ENCODE measurements at regions of chr15 and their contacts with region 1.

Region 1: GRCh38 chr15:45166834-45167630 is 20.7 kb downstream of the SHF start:
- DNase-seq: peak; percentile 64 to 90 (median 84)
- ATAC-seq: peak; percentile 90
- H3K4me3 ChIP-seq: peak overlapping the region; percentile 73 to 81
- H3K4me3 Mint-ChIP-seq: peak overlapping the region; percentile 81
- H3K27ac ChIP-seq: peak overlapping the region; percentile 86 to 87
- H3K27ac Mint-ChIP-seq: peak overlapping the region; percentile 87
- H3K4me1 ChIP-seq: peaks cover 17% of the 10 kb centered on the region
- H3K4me1 Mint-ChIP-seq: peaks cover 19% of the 10 kb centered on the region
- H3K27me3 ChIP-seq: no peaks in the 10 kb centered on the region
- H3K27me3 Mint-ChIP-seq: no peaks in the 10 kb centered on the region
- CTCF ChIP-seq: peak; percentile 47

Region 2: GRCh38 chr15:44519537-44519936 is 647.5 kb before region 1 on chr15:
- CTCF ChIA-PET with region 1: no interaction called
- POLR2A ChIA-PET with region 1: no interaction called
- intact Hi-C with region 1: no loop called
- DNase-seq: no peak
- ATAC-seq: no peak
- H3K4me3 ChIP-seq: no peak overlapping the region
- H3K4me3 Mint-ChIP-seq: no peak overlapping the region
- H3K27ac ChIP-seq: no peak overlapping the region
- H3K27ac Mint-ChIP-seq: no peak overlapping the region
- H3K4me1 ChIP-seq: no peaks in the 10 kb centered on the region
- H3K4me1 Mint-ChIP-seq: no peaks in the 10 kb centered on the region
- H3K27me3 ChIP-seq: no peaks in the 10 kb centered on the region
- H3K27me3 Mint-ChIP-seq: no peaks in the 10 kb centered on the region
- CTCF ChIP-seq: no peak

Region 3: DNA sequence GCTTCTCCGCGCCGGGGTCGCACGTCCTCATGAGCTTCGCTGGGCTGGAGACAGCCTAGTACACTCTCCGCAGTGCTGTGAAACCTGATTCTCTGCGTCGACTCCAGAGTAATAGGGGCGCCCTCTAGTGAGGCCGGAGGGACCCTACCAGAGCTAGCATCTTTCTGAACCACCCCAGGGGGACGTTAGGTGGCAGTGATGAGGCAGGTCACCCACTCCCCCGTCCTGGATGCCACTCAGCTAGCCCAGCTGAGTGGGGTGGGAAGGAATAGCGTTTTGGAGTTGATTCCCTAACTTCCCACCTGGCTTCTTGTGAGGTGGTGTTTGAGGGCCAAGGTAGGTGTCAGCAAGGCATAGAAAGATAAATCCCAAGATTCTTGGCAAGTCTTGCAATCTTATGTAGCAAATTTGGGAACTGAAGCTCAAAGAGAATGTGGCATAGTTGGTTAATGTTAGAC is 48.9 kb before region 1 on chr15:
- CTCF ChIA-PET with region 1: interaction called, 9 read pairs
- POLR2A ChIA-PET with region 1: interaction called, 3 read pairs
- intact Hi-C with region 1: loop called in 1 of 2 experiments (anchors 2 kb)
- DNase-seq: peak; percentile 67 to 90 (median 85)
- ATAC-seq: peak; percentile 99
- H3K4me3 ChIP-seq: peak overlapping the region; percentile 33 to 38
- H3K4me3 Mint-ChIP-seq: peak overlapping the region; percentile 78
- H3K27ac ChIP-seq: no peak overlapping the region
- H3K27ac Mint-ChIP-seq: no peak overlapping the region
- H3K4me1 ChIP-seq: peaks cover 35% of the 10 kb centered on the region
- H3K4me1 Mint-ChIP-seq: peaks cover 33% of the 10 kb centered on the region
- H3K27me3 ChIP-seq: peaks cover 18 to 31% of the 10 kb centered on the region in 2 experiments
- H3K27me3 Mint-ChIP-seq: peaks cover 70% of the 10 kb centered on the region
- CTCF ChIP-seq: peak; percentile 100

Region 4: GRCh38 chr15:45136378-45136764 is 30.7 kb before region 1 on chr15:
- CTCF ChIA-PET with region 1: interaction called, 12 read pairs
- POLR2A ChIA-PET with region 1: no interaction called
- intact Hi-C with region 1: no loop called
- DNase-seq: peak in 2 of 9 experiments; percentile 32 to 47
- ATAC-seq: peak; percentile 52
- H3K4me3 ChIP-seq: no peak overlapping the region
- H3K4me3 Mint-ChIP-seq: peak overlapping the region; percentile 58
- H3K27ac ChIP-seq: no peak overlapping the region
- H3K27ac Mint-ChIP-seq: no peak overlapping the region
- H3K4me1 ChIP-seq: peaks cover 7% of the 10 kb centered on the region
- H3K4me1 Mint-ChIP-seq: peaks cover 13% of the 10 kb centered on the region
- H3K27me3 ChIP-seq: peaks cover 13 to 14% of the 10 kb centered on the region in 2 experiments
- H3K27me3 Mint-ChIP-seq: peaks cover 33% of the 10 kb centered on the region
- CTCF ChIP-seq: no peak

Region 5: DNA sequence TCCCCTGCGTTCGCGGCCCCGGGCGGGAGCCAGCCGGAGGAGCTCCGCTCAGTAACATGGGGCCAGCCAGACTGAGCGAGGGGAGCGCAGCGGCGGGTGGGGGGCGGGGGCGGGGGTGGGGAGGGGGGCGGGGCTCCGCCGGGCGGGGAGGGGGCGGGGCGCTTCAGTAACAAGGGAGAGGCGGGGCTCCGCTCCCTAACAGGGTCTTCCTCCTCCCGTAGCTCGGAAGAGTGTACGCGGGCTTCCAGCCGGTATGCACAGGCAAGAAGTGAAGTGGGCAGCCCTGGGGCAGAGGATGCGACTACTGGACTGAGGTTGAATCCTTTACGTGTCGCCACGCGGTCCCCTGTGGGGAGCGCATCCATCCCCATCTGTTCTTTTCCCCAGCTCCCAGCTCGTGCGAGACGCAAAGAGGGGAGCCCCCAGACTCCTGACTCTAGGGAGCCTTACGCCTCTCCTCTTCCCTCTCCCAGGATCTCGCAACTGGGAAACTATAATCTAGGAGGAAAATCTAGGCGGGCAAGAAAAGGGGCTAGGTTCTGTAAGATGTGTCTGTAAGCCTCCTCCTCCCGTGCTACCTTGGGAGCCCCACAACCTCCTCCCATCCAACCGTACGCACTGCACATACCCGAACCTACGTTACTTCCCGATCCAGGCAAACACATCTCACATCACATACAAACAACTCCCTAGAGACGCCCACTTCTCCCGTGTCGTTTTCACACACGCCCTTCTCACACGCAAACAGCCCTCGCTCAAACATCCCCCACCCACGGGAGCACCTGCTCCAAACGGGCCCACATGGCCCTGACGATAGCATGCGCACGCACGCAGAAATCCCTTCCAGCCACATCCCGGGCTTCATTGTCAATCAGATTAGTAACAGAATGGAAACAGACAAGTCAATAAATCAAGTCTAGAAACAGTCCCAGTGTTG is 21.1 kb after region 1 on chr15 and contains the start of gene SHF:
- CTCF ChIA-PET with region 1: interaction called, 10 read pairs
- POLR2A ChIA-PET with region 1: interaction called, 10 read pairs
- intact Hi-C with region 1: loop called (anchors 1 to 2 kb)
- DNase-seq: peak; percentile 24 to 87 (median 68)
- ATAC-seq: peak; percentile 79
- H3K4me3 ChIP-seq: peak within 1 kb of the TSS; percentile 84 to 99
- H3K4me3 Mint-ChIP-seq: peak within 1 kb of the TSS; percentile 89
- H3K27ac ChIP-seq: peak within 1 kb of the TSS; percentile 71 to 73
- H3K27ac Mint-ChIP-seq: peak within 1 kb of the TSS; percentile 90
- H3K4me1 ChIP-seq: peaks cover 16% of the 10 kb centered on the region
- H3K4me1 Mint-ChIP-seq: peaks cover 26% of the 10 kb centered on the region
- H3K27me3 ChIP-seq: no peaks in the 10 kb centered on the region
- H3K27me3 Mint-ChIP-seq: no peaks in the 10 kb centered on the region
- CTCF ChIP-seq: no peak
- total RNA-seq, gene SHF: 5.0 to 5.6 TPM

Region 6: GRCh38 chr15:45279024-45279698 is 112.1 kb after region 1 on chr15:
- CTCF ChIA-PET with region 1: interaction called, 6 read pairs
- POLR2A ChIA-PET with region 1: no interaction called
- intact Hi-C with region 1: loop called (anchors 1 kb)
- DNase-seq: peak; percentile 95 to 99 (median 97)
- ATAC-seq: peak; percentile 99
- H3K4me3 ChIP-seq: peak overlapping the region; percentile 61 to 69
- H3K4me3 Mint-ChIP-seq: peak overlapping the region; percentile 91
- H3K27ac ChIP-seq: peak overlapping the region; percentile 66 to 85
- H3K27ac Mint-ChIP-seq: peak overlapping the region; percentile 94
- H3K4me1 ChIP-seq: peaks cover 15% of the 10 kb centered on the region
- H3K4me1 Mint-ChIP-seq: peaks cover 22% of the 10 kb centered on the region
- H3K27me3 ChIP-seq: no peaks in the 10 kb centered on the region
- H3K27me3 Mint-ChIP-seq: peaks cover 1% of the 10 kb centered on the region
- CTCF ChIP-seq: no peak

Measured in CD8-positive, alpha-beta T cell (primary cell).